ENCODE measurements at regions of chr1 and their contacts with region 1.

Region 1: GRCh38 chr1:81978945-81979344 is 178.2 kb downstream of the ADGRL2 start:
- DNase-seq: no peak
- ATAC-seq: no peak

Region 2: DNA sequence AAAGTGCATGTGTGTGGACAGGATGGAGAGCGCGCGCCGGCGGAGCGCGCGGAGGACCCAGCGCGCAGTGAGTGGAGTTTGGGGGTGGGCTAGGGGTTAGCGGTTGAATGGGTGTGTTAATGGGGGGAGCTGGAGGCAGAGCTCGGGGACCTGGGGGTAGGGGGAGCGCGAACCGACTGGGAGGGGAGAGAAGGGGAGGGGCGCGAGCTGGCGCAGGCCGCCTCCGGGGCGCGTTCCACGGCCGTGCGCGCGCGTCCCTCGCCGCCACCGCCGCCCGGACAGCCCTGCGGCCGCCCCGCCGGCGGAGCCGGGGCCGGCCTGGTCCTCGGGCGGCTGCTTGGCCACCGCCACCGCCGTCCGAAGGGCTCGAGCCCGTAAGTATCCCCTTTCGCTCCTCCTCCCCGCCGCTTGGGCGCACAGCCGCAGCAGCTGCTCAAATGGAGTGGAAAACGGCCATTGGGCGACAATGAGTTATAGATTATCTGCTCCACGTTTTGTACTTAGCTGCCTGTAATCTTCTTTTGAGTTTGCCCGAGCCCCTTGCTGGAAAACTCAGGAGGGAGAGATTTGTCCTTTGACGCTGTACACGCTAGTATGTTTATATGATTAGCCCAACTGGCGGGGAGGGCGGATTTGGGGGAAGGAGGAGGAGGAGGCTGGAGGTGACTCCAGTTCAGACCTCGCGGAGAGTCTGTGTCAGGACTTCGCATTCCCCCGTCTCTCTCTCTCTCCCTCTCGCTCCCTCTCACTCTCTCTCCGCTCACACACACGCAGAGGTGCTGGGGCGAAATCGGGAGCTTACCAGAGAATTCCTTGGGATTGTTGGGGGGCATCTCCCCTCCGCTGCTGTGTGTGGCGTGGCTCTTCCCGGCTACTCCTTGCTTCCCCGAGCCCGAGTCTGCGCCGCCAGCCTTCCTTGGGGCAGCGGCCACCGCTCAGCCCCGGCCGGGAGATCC is 178.0 kb before region 1 on chr1 and contains the start of gene ADGRL2:
- intact Hi-C with region 1: loop called (anchors 10 kb)
- DNase-seq: peak; percentile 81
- ATAC-seq: peak; percentile 87
- total RNA-seq, gene ADGRL2: 48.1 TPM

Region 3: DNA sequence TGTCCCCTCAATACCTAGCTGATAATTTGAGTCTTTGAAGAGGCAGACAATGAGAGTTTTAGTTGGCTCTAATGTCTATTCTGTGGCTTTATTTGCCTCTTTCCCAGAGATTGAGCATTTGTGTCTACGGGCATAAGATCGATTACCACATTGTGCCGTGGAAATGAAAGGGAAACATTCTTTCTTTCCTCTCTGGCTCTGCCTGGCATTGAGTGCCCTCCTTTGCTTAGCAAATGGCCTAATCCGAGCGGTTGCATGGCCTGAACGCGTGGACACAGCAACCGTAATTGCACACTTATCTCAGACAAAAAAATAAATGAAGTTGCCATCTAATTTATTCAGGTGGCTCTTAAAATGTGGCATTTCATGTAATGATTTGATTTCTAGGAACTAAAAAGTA is 69.7 kb after region 1 on chr1:
- intact Hi-C with region 1: no loop called
- DNase-seq: no peak
- ATAC-seq: no peak

Region 4: GRCh38 chr1:82152356-82153272 is 173.7 kb after region 1 on chr1:
- intact Hi-C with region 1: no loop called
- DNase-seq: no peak
- ATAC-seq: no peak

Measured in left ventricle myocardium superior (tissue), 1 donor.